Heart left ventricle (tissue), 16 donors: ENCODE measurements at regions of chr9 and their contacts with region 1.

Region 1: GRCh38 chr9:79237861-79238260 is 333.9 kb upstream of the TLE4 start:
- DNase-seq: no peak
- ATAC-seq: no peak
- H3K4me3 ChIP-seq: no peak overlapping the region
- H3K27ac ChIP-seq: no peak overlapping the region
- H3K4me1 ChIP-seq: no peaks in the 10 kb centered on the region
- H3K27me3 ChIP-seq: no peaks in the 10 kb centered on the region
- CTCF ChIP-seq: no peak
- POLR2A ChIP-seq: no peak

Region 2: DNA sequence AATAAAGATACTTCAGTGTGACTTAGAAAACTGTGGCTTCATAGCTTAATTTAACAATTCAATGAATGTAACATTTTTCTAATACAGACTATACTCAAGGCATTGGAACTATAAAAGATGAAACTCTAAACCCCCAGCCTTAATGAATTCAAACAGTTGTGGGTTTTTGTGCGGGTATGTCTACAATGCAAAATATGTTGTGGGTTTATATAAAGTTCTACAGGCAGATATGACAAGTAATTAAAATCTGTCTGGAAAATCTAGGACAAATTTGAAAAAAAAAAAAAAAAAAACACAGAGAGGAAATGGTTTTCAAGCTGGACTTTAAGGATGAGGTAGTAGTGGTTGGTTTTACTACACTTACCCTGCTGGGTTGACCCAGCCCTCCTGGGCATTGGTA is 133.6 kb before region 1 on chr9:
- intact Hi-C with region 1: no loop called
- DNase-seq: no peak
- ATAC-seq: no peak
- H3K4me3 ChIP-seq: no peak overlapping the region
- H3K27ac ChIP-seq: no peak overlapping the region
- H3K4me1 ChIP-seq: no peaks in the 10 kb centered on the region
- H3K27me3 ChIP-seq: no peaks in the 10 kb centered on the region
- CTCF ChIP-seq: no peak
- POLR2A ChIP-seq: no peak

Region 3: DNA sequence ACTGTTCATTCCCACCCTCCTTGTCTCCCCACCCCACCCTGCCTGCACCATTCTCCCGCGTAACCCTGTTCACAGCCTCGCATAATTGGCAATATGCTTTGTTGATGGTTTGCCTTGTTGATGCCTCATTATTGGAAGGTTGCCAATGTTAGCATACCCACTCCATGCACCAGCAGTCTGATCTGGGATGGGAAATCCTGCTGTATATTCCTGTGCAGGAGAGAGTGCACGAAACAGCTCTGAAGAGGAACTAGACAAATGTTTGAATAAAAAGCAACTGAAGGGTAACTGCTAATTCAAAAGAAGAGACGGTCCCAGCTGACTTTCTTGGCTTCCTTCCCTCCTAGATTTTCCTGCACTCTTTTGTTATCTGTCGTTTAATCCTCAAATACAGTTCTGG is 62.2 kb after region 1 on chr9:
- intact Hi-C with region 1: loop called in 1 of 10 experiments (anchors 5 kb)
- DNase-seq: no peak
- ATAC-seq: no peak
- H3K4me3 ChIP-seq: no peak overlapping the region
- H3K27ac ChIP-seq: no peak overlapping the region
- H3K4me1 ChIP-seq: no peaks in the 10 kb centered on the region
- H3K27me3 ChIP-seq: peaks cover 0 to 6% (median 0%) of the 10 kb centered on the region in 9 donors
- CTCF ChIP-seq: no peak
- POLR2A ChIP-seq: no peak